Activated CD4-positive, alpha-beta memory T cell treated with anti-CD3 and anti-CD28 coated beads for 36 hours (primary cell): ENCODE measurements at regions of chr9 and their contacts with region 1.

Region 1: DNA sequence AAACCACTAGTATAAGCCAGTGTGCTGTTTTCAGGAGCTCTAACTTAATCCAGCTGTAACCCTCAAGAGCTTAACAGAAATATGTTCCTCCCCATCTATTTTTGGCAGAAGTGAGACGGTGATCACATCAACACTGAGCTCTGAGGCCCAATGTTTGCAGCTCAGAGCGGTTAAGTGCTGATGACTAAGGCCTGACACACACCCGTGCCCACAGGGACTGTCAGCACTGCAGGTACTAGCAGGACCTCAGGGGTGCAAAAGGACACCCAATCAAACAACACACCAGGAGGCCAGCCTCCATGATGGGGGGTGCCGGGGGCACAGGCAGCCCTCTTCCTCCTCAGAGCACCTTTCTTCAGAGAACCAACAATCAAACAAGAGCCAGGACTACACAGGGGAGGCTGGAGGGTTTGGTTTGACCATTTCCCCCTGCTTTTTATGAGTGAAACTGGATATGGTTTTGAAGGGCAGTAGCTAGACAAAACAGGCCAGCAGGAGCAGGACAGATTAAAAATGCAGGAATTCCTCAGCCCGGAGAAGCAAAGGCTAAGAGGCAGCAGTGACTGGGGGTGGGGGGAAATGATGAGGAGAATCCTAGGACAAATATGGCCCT is 61.3 kb downstream of the RAPGEF1 start:
- DNase-seq: peak; percentile 92
- H3K4me3 Mint-ChIP-seq: peak overlapping the region; percentile 83
- H3K27ac Mint-ChIP-seq: peak overlapping the region; percentile 99
- H3K4me1 Mint-ChIP-seq: peaks cover 92% of the 10 kb centered on the region
- H3K27me3 Mint-ChIP-seq: no peaks in the 10 kb centered on the region

Region 2: GRCh38 chr9:131585375-131585774 is 93.2 kb before region 1 on chr9:
- CTCF ChIA-PET with region 1: no interaction called
- POLR2A ChIA-PET with region 1: no interaction called
- intact Hi-C with region 1: no loop called
- DNase-seq: peak; percentile 74
- H3K4me3 Mint-ChIP-seq: no peak overlapping the region
- H3K27ac Mint-ChIP-seq: peak overlapping the region; percentile 84
- H3K4me1 Mint-ChIP-seq: peaks cover 25% of the 10 kb centered on the region
- H3K27me3 Mint-ChIP-seq: no peaks in the 10 kb centered on the region

Region 3: GRCh38 chr9:131645078-131645776 is 33.4 kb before region 1 on chr9:
- CTCF ChIA-PET with region 1: interaction called, 10 read pairs
- POLR2A ChIA-PET with region 1: interaction called, 36 read pairs
- intact Hi-C with region 1: no loop called
- DNase-seq: peak; percentile 65
- H3K4me3 Mint-ChIP-seq: peak overlapping the region; percentile 43
- H3K27ac Mint-ChIP-seq: peak overlapping the region; percentile 94
- H3K4me1 Mint-ChIP-seq: peaks cover 68% of the 10 kb centered on the region
- H3K27me3 Mint-ChIP-seq: no peaks in the 10 kb centered on the region

Region 4: DNA sequence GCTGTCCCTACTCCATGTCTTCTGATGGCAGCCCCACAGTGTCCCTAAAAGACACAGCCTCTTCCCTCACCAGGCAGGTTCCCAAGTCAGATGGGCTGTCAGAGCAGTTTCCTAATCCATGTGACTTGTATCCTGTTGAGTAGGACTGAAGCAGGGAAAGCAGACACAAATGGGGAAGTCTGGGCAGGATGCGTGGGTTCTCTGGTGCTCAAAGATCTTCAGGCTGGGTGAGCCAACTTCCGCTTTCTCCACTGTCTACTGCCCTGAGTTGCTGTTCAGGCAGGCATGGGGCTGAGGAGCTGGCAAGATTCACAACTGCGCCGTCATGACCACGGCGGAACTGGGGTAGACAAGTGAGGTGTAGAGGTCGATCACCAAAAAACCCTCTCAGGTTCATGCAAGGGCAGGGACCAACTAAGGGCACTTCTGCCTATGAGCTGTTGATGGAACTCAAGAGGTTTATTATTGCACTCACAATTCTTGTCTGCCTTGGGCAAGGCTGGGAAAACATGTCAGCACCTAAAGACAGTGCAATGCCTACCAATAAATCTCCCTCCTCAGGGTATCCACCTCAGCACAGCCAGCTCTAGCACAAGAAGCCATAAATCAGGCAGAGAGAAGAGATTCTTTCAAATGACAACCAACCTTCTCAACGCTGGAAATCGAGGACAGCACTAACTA is 22.1 kb before region 1 on chr9:
- CTCF ChIA-PET with region 1: interaction called, 3 read pairs
- POLR2A ChIA-PET with region 1: interaction called, 13 read pairs
- intact Hi-C with region 1: loop called (anchors 1 kb)
- DNase-seq: peak; percentile 84
- H3K4me3 Mint-ChIP-seq: peak overlapping the region; percentile 58
- H3K27ac Mint-ChIP-seq: peak overlapping the region; percentile 91
- H3K4me1 Mint-ChIP-seq: peaks cover 86% of the 10 kb centered on the region
- H3K27me3 Mint-ChIP-seq: no peaks in the 10 kb centered on the region

Region 5: GRCh38 chr9:131704141-131704983 is 25.8 kb after region 1 on chr9:
- CTCF ChIA-PET with region 1: interaction called, 15 read pairs
- POLR2A ChIA-PET with region 1: interaction called, 20 read pairs
- intact Hi-C with region 1: no loop called
- DNase-seq: no peak
- H3K4me3 Mint-ChIP-seq: no peak overlapping the region
- H3K27ac Mint-ChIP-seq: peak overlapping the region; percentile 6
- H3K4me1 Mint-ChIP-seq: peaks cover 86% of the 10 kb centered on the region
- H3K27me3 Mint-ChIP-seq: no peaks in the 10 kb centered on the region

Region 6: DNA sequence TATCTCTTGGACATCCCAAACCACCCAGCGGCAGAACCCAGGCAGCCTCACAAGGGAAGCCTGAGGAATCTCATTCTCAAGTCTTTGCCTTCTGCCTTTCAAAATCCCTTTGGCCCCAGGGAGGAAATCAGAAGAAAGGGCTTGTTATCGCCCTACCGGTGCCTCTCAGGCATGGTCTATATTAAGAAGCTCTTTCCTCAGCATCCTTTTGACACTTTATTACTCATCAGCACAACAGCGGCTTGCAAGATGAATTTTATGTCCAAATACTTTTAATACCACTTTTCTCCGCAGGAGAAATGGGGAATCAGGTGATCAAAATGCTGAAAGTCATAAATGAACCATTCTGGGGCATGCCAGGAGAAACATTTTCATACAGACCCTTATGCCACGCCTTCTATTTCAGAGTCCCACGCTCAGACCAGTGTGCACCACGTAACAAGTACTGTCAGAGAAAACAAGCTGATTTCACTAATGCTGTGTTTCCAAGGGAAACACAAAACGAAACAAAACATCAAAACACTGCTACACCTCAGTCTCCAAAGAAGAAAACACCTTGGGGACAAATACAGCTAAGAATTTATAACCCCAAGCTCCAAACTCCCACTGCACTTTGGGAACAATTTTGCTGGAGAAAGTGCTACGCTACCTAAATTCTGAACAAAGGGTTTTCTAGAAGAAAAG is 31.3 kb after region 1 on chr9:
- CTCF ChIA-PET with region 1: interaction called, 15 read pairs
- POLR2A ChIA-PET with region 1: interaction called, 20 read pairs
- intact Hi-C with region 1: loop called (anchors 1 kb)
- DNase-seq: peak; percentile 73
- H3K4me3 Mint-ChIP-seq: peak overlapping the region; percentile 62
- H3K27ac Mint-ChIP-seq: peak overlapping the region; percentile 96
- H3K4me1 Mint-ChIP-seq: peaks cover 86% of the 10 kb centered on the region
- H3K27me3 Mint-ChIP-seq: no peaks in the 10 kb centered on the region

Region 7: GRCh38 chr9:131719262-131719908 is 40.8 kb after region 1 on chr9:
- CTCF ChIA-PET with region 1: interaction called, 4 read pairs
- POLR2A ChIA-PET with region 1: interaction called, 11 read pairs
- intact Hi-C with region 1: no loop called
- DNase-seq: no peak
- H3K4me3 Mint-ChIP-seq: no peak overlapping the region
- H3K27ac Mint-ChIP-seq: peak overlapping the region; percentile 86
- H3K4me1 Mint-ChIP-seq: peaks cover 70% of the 10 kb centered on the region
- H3K27me3 Mint-ChIP-seq: no peaks in the 10 kb centered on the region